ENCODE measurements at regions of chr15 and their contacts with region 1.

Region 1: DNA sequence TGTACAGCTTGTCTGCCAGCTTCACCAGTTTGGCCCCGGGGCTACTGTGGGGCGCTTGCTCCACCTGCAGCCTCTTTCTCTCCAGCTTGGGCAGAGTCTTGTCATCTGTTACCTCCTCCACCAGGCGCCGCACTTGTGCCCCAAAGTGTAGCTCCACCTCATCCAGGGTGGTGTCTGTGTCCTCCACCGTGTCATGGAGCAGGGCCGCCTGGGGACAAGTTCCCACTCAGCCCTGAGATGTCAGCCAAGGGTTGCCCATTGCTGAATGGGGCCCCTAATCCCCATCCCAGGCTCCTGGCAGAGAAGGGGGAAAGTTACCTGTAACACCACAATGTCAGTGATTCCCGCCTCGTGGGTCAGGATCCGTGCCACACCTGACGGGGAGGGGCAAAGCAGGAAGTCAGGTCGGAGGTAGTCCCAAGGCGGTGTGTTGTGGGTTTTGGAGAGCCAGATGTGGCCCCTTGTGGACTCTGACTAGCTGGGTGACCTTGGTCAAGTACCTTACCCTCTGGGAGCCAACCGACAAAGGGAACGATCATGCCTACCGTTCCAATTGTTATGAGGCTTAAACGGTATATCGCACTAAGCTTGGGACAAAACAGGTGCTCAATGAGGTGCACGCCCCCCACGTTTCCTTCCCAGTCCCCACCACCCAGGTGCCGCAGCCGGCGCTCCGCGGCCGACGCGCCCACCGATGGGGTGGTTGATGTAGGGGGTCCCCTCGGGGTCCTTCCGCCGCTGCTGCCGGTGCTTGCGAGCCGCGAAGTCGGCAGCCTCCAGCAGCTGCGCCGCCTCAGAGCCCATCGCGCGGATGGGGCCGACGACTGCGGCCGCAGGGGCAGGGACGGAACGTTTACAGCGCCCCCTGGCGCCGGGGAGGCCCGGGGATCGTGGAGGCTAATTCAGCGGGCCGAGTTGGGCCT is at the start of gene HDDC3:
- DNase-seq: peak; percentile 87
- H3K4me3 Mint-ChIP-seq: peak within 1 kb of the TSS; percentile 99
- H3K27ac Mint-ChIP-seq: peak within 1 kb of the TSS; percentile 99
- H3K4me1 Mint-ChIP-seq: peaks cover 69% of the 10 kb centered on the region
- H3K27me3 Mint-ChIP-seq: no peaks in the 10 kb centered on the region
- total RNA-seq, gene HDDC3: 38.8 and 39.0 TPM in 2 replicates

Region 2: GRCh38 chr15:90265271-90266060 is 666.5 kb before region 1 on chr15 and contains the start of gene NGRN:
- intact Hi-C with region 1: loop called (anchors 10 kb)
- DNase-seq: peak; percentile 89
- H3K4me3 Mint-ChIP-seq: peak within 1 kb of the TSS; percentile 99
- H3K27ac Mint-ChIP-seq: peak within 1 kb of the TSS; percentile 99
- H3K4me1 Mint-ChIP-seq: peaks cover 43% of the 10 kb centered on the region
- H3K27me3 Mint-ChIP-seq: no peaks in the 10 kb centered on the region
- total RNA-seq, gene NGRN: 39.0 and 39.9 TPM in 2 replicates

Region 3: DNA sequence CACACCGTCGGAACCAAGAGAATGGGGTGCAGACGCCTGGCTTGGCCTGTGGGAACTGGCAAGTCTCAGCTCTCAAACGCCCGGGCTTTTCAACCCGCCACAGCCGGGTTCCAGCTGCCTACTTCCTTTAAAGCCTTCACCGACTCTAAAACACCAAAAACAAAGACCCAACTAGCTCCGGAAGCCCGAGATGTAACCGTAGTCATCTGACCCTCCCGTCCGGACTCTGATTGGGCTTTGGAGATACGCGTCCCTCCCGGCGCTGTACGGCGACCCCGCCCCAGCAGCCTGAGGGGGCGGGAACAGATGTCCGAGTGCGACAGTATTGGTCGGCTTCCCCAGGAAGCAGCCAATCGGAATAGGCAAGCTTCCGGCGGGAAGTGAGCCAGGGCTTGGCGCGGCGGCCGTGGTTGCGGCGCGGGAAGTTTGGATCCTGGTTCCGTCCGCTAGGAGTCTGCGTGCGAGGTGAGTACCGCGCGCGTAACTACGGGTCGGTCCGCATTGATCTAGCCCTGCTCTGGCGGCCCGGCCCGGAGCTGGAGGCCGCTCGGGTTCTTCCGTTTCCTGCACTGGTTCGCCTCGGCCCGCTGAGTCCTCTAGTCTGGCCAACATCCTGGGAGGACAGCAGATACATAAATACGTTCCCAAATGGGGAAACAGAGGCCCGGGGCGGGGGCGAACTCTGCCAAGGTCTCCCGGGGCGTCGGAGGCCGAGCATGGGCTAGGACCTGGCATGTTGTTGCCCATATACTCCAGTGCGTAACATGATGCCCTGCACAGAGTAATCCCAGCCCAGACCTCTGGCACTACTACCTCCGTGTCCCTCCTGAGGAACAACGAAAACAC is 214.8 kb before region 1 on chr15 and contains the start of gene BLM:
- intact Hi-C with region 1: loop called (anchors 1 kb)
- DNase-seq: peak; percentile 97
- H3K4me3 Mint-ChIP-seq: peak within 1 kb of the TSS; percentile 90
- H3K27ac Mint-ChIP-seq: peak within 1 kb of the TSS; percentile 96
- H3K4me1 Mint-ChIP-seq: peaks cover 38% of the 10 kb centered on the region
- H3K27me3 Mint-ChIP-seq: no peaks in the 10 kb centered on the region
- total RNA-seq, gene BLM: 64.3 and 65.1 TPM in 2 replicates

Region 4: GRCh38 chr15:90902040-90902839 is 29.8 kb before region 1 on chr15:
- intact Hi-C with region 1: loop called (anchors 1 kb)
- DNase-seq: peak; percentile 69
- H3K4me3 Mint-ChIP-seq: peak overlapping the region; percentile 79
- H3K27ac Mint-ChIP-seq: peak overlapping the region; percentile 82
- H3K4me1 Mint-ChIP-seq: peaks cover 44% of the 10 kb centered on the region
- H3K27me3 Mint-ChIP-seq: no peaks in the 10 kb centered on the region

Region 5: GRCh38 chr15:90946538-90946937 is 14.5 kb after region 1 on chr15:
- intact Hi-C with region 1: no loop called
- DNase-seq: no peak
- H3K4me3 Mint-ChIP-seq: no peak overlapping the region
- H3K27ac Mint-ChIP-seq: no peak overlapping the region
- H3K4me1 Mint-ChIP-seq: no peaks in the 10 kb centered on the region
- H3K27me3 Mint-ChIP-seq: no peaks in the 10 kb centered on the region

Region 6: GRCh38 chr15:91022075-91022835 is 90.3 kb after region 1 on chr15 and contains the start of gene VPS33B:
- intact Hi-C with region 1: loop called (anchors 1 kb)
- DNase-seq: peak; percentile 73
- H3K4me3 Mint-ChIP-seq: peak within 1 kb of the TSS; percentile 93
- H3K27ac Mint-ChIP-seq: peak within 1 kb of the TSS; percentile 94
- H3K4me1 Mint-ChIP-seq: peaks cover 40% of the 10 kb centered on the region
- H3K27me3 Mint-ChIP-seq: no peaks in the 10 kb centered on the region
- total RNA-seq, gene VPS33B: 20.8 and 20.9 TPM in 2 replicates